ENCODE measurements at regions of chr2 and their contacts with region 1.

Region 1: DNA sequence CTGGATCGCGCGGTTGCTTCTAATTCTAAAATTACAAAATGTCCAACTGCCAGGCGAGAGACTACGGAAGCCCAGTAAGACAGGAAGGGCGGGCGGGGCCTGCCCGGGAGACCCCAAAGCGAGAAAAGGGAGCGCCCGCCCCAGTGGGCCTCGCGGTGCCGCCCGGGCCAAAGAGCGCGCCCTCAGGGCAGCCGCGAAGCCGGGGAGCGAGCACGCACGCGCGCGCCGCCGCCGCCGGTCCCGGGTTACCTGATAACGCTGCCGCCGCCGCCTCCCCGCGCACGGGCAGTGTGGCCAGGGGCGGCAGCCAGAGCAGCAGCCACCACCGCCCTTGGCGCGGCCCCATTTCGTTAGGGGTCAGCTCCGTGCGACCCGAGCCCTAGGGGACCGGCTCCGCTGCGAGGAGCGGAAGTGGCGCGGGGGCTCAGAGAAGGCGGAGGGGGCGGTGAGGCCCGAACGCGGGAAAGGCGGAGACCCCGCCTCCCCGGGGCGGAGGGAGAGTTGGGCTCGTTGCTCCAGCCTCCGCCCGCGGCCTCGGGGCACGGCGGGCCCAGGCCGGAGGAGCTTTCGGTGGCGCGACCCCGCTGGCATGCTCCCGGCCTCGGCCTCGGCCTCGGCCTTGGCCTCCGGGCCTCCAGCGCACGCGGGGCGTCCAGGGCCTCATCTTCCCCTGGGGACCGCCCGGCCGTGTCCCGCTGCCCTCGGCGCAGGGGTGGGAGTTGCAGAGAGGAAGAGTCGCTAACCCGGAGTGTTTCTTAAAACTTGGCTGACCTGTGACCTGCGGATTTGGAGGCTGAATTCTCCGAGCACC is at the start of gene NEMP2:
- DNase-seq: peak; percentile 81 to 87
- ATAC-seq: peak; percentile 87 to 96 (median 92)
- H3K4me3 ChIP-seq: peak within 1 kb of the TSS; percentile 60 to 88 (median 74)
- H3K27ac ChIP-seq: peak within 1 kb of the TSS; percentile 89 to 99 (median 98)
- H3K4me1 ChIP-seq: peaks cover 0 to 52% (median 35%) of the 10 kb centered on the region in 9 donors
- H3K27me3 ChIP-seq: no peaks in the 10 kb centered on the region
- CTCF ChIP-seq: peak in 4 of 9 donors; percentile 7 to 27 (median 12)
- total RNA-seq, gene NEMP2: 2.0 to 4.7 (median 2.7) TPM

Region 2: DNA sequence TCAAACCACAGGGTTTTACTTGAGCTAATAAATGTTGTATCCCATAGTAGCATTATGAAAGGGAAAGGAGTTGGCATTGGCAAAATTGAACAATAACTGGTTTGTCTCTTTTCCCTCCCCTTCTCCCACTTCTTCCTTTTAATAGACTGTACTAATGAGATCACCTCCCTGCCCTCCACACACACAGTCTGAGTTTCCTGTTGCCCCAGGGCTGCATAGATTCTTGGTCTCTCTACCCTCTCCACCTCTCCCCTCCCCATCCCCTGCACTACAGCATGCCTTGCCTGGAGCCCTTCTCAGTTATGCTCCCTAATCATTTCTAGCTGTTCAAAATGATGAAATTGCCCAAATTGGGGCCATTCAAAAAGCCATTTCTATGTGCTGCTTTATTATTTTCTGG is 37.2 kb after region 1 on chr2:
- intact Hi-C with region 1: loop called in 3 of 10 experiments (anchors 5 kb)
- DNase-seq: no peak
- ATAC-seq: no peak
- H3K4me3 ChIP-seq: no peak overlapping the region
- H3K27ac ChIP-seq: peak overlapping the region in 2 of 10 donors; percentile 4 to 14
- H3K4me1 ChIP-seq: peaks cover 0 to 15% (median 0%) of the 10 kb centered on the region in 9 donors
- H3K27me3 ChIP-seq: no peaks in the 10 kb centered on the region
- CTCF ChIP-seq: no peak

Region 3: GRCh38 chr2:190578158-190579057 is 43.9 kb after region 1 on chr2:
- intact Hi-C with region 1: loop called in 5 of 10 experiments (anchors 5 to 10 kb)
- DNase-seq: peak in 1 of 2 donors; percentile 73
- ATAC-seq: peak; percentile 44 to 88 (median 74)
- H3K4me3 ChIP-seq: no peak overlapping the region
- H3K27ac ChIP-seq: peak overlapping the region in 9 of 10 donors; percentile 7 to 76 (median 34)
- H3K4me1 ChIP-seq: peaks cover 6 to 60% (median 42%) of the 10 kb centered on the region in 9 donors
- H3K27me3 ChIP-seq: no peaks in the 10 kb centered on the region
- CTCF ChIP-seq: peak in 1 of 9 donors; percentile 22

Region 4: GRCh38 chr2:190583507-190584337 is 49.2 kb after region 1 on chr2:
- intact Hi-C with region 1: loop called in 4 of 10 experiments (anchors 5 to 10 kb)
- DNase-seq: peak; percentile 66 to 72
- ATAC-seq: peak; percentile 35 to 63 (median 53)
- H3K4me3 ChIP-seq: no peak overlapping the region
- H3K27ac ChIP-seq: peak overlapping the region in 8 of 10 donors; percentile 6 to 75 (median 58)
- H3K4me1 ChIP-seq: peaks cover 6 to 56% (median 32%) of the 10 kb centered on the region in 9 donors
- H3K27me3 ChIP-seq: no peaks in the 10 kb centered on the region
- CTCF ChIP-seq: no peak

Region 5: DNA sequence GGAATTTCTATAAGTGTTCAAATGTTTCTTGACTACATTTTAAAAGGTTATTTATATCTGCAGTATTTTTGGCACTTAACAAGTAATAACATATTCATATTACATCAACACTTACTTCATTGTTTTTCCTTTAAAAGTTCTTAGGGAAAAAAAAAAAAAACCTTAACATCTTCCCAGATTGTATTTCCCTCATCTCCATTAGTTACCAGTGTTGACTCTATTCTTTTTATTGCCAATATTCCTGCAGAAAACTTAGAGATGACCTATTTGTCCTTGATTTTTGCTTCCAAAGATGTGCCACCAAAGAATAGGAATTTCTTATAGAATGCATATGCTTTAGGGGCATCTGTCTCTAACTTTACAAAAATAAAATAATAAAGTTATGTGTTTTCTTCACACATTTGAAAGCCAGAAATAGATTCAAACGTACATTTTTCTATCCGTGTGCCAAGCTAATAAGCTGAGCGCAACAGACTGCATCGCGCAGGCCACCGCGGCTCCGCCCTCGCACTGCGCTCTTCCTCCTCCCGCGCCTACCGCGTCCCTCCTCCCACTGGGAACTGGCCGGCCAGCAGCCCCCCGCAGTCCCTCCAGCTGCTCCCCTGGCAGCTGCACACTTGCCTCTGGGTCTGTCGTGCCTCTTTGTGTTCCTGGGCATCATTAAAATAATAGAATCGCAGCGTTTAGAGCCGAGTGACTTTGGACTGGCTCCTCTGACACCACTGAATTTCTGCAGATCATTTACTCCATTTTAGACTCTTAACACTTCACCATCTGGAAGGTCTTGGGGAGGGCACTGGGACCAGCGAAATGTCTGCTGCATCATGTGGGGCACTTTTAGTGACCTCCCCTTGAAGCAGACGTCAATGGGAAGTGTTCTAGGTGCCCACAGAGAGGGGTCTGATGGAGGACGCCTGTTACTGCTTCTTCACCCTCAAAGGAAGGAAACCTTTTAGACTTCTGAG is 93.2 kb after region 1 on chr2:
- intact Hi-C with region 1: loop called in 2 of 10 experiments (anchors 5 to 10 kb)
- DNase-seq: peak; percentile 59 to 62
- ATAC-seq: peak; percentile 85 to 93 (median 90)
- H3K4me3 ChIP-seq: peak overlapping the region in 9 of 10 donors; percentile 33 to 60 (median 56)
- H3K27ac ChIP-seq: peak overlapping the region; percentile 66 to 89 (median 78)
- H3K4me1 ChIP-seq: peaks cover 0 to 36% (median 18%) of the 10 kb centered on the region in 9 donors
- H3K27me3 ChIP-seq: no peaks in the 10 kb centered on the region
- CTCF ChIP-seq: no peak

Region 6: DNA sequence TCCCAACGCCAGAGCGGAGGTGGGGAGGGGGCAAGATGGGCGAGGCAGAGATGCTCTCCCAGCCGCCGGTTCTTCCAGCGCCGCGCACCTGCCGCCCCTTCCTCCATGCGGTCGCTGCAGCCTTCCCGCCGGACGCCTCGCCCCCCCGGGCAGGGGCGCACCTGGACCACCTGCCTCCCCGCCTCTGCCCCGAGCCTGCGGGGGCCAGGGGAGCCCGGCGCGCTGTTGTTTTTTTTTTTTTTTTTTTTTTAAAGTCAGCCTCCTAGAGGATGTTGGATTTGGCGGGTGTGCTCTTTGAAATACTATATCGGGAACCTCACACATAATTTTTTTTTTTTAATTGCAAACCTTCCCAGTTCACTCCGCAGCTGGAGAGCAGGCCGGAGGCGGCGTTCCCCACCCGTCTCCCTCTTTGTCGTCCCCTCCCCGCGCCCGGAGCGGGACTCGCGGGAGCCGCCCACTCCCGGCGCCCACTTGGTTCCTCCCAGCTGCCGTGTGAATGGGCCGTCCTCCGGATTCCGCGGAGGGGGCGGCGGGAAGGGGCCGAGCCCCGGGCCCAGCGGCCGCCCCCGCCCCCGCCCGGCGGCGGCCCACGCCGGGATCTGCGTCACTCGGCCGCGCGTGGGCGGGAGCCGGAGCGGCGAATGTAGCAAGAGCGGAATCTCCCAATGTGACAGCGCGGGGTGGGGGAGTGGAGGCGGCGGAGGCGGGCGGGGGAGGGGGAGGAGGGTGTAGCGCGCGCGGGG is 113.9 kb after region 1 on chr2:
- intact Hi-C with region 1: loop called in 9 of 10 experiments (anchors 1 to 10 kb)
- DNase-seq: peak; percentile 91 to 94
- ATAC-seq: peak; percentile 93 to 97 (median 96)
- H3K4me3 ChIP-seq: peak overlapping the region; percentile 79 to 95 (median 90)
- H3K27ac ChIP-seq: peak overlapping the region; percentile 71 to 99 (median 96)
- H3K4me1 ChIP-seq: peaks cover 0 to 74% (median 32%) of the 10 kb centered on the region in 9 donors
- H3K27me3 ChIP-seq: no peaks in the 10 kb centered on the region
- CTCF ChIP-seq: no peak

Region 7: GRCh38 chr2:190804182-190804795 is 269.8 kb after region 1 on chr2:
- intact Hi-C with region 1: loop called in 2 of 10 experiments (anchors 10 kb)
- DNase-seq: no peak
- ATAC-seq: peak in 1 of 8 donors; percentile 38
- H3K4me3 ChIP-seq: no peak overlapping the region
- H3K27ac ChIP-seq: no peak overlapping the region
- H3K4me1 ChIP-seq: peaks cover 0 to 7% (median 0%) of the 10 kb centered on the region in 9 donors
- H3K27me3 ChIP-seq: no peaks in the 10 kb centered on the region
- CTCF ChIP-seq: peak; percentile 35 to 82 (median 69)

Measured in heart right ventricle (tissue), 16 donors.